Psoas muscle (tissue), 8 donors: ENCODE measurements at regions of chr12 and their contacts with region 1.

Region 1: DNA sequence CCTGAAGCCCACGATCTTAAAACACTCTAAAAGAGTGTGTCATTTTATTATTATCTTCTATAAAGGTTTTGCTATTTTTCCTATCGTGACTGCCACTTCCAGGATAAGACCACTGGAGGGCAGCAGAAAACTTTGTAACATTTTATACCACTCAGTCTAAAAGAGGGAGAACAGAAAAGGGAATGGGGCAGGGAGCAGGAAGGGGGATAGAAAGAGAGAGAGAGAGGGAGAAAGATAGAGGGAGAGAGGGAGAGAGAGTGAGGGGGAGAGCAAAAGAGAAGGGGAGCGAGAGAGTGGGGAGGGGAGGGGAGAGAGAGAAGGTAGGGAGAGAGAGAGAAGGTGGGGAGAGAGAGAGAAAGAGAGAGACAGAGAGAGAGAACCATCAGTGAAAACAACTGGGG is 2.0 kb upstream of the ART4 start:
- DNase-seq: no peak
- ATAC-seq: peak; percentile 63 to 80 (median 76)
- H3K4me3 ChIP-seq: no peak overlapping the region
- H3K27ac ChIP-seq: no peak overlapping the region
- H3K4me1 ChIP-seq: peaks cover 30% of the 10 kb centered on the region
- H3K27me3 ChIP-seq: no peaks in the 10 kb centered on the region
- CTCF ChIP-seq: peak; percentile 76

Region 2: GRCh38 chr12:14803011-14803829 is 42.1 kb before region 1 on chr12 and contains the starts of genes C12orf60 and WBP11:
- intact Hi-C with region 1: no loop called
- DNase-seq: peak; percentile 91 to 94
- ATAC-seq: peak; percentile 99 to 100 (median 100)
- H3K4me3 ChIP-seq: peak within 1 kb of the TSS; percentile 94
- H3K27ac ChIP-seq: peak within 1 kb of the TSS; percentile 94
- H3K4me1 ChIP-seq: peaks cover 23% of the 10 kb centered on the region
- H3K27me3 ChIP-seq: no peaks in the 10 kb centered on the region
- CTCF ChIP-seq: no peak
- total RNA-seq, gene C12orf60: 0.78 to 2.3 (median 1.6) TPM
- total RNA-seq, gene WBP11: 34.6 to 68.0 (median 58.3) TPM

Region 3: DNA sequence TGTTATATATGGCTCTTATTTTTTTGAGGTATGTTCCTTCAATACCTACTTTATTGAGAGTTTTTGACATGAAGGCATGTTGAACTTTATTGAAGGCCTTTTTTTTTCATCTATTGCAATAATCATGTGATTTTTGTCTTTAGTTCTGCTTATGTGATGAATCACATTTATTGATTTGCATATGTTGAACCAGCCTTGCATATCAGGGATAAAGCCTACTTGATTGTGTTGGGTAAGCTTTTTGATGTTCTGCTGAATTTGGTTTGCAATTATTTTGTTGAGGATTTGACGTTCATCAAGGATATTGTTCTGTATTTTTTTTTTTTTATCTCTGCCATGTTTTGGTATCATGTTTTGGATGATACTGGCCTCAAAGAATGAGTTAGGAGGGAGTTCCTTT is 13.2 kb after region 1 on chr12:
- intact Hi-C with region 1: no loop called
- DNase-seq: no peak
- ATAC-seq: no peak
- H3K4me3 ChIP-seq: no peak overlapping the region
- H3K27ac ChIP-seq: no peak overlapping the region
- H3K4me1 ChIP-seq: no peaks in the 10 kb centered on the region
- H3K27me3 ChIP-seq: no peaks in the 10 kb centered on the region
- CTCF ChIP-seq: no peak

Region 4: DNA sequence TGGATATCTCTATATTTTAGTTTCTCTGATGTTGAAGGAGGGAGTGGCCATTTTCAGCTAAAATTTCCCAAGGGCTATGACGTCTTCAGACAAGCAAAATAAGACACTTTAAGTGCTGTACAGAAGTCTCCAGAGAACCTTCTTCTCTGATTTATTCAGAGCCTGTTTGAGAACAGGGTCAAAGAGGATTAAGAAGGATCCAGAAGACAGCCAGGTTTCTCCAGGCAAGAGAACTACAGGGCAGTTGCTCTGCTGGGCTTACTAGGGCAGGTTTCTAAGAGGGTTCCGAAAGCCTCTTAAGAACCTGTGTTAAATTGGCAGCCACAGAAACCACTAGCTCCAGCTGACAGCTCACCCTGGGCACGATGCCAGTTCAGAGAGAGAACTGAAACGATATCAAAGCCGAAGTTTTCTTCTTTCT is 39.1 kb after region 1 on chr12:
- intact Hi-C with region 1: loop called in 1 of 2 experiments (anchors 5 kb)
- DNase-seq: peak; percentile 77 to 89
- ATAC-seq: peak; percentile 50 to 86 (median 73)
- H3K4me3 ChIP-seq: peak overlapping the region; percentile 52
- H3K27ac ChIP-seq: peak overlapping the region; percentile 57
- H3K4me1 ChIP-seq: peaks cover 5% of the 10 kb centered on the region
- H3K27me3 ChIP-seq: no peaks in the 10 kb centered on the region
- CTCF ChIP-seq: no peak

Region 5: GRCh38 chr12:14995583-14996425 is 150.5 kb after region 1 on chr12:
- intact Hi-C with region 1: loop called (anchors 2 kb)
- DNase-seq: no peak
- ATAC-seq: peak in 3 of 4 donors; percentile 42 to 81 (median 53)
- H3K4me3 ChIP-seq: no peak overlapping the region
- H3K27ac ChIP-seq: no peak overlapping the region
- H3K4me1 ChIP-seq: peaks cover 7% of the 10 kb centered on the region
- H3K27me3 ChIP-seq: no peaks in the 10 kb centered on the region
- CTCF ChIP-seq: peak; percentile 79

Region 6: DNA sequence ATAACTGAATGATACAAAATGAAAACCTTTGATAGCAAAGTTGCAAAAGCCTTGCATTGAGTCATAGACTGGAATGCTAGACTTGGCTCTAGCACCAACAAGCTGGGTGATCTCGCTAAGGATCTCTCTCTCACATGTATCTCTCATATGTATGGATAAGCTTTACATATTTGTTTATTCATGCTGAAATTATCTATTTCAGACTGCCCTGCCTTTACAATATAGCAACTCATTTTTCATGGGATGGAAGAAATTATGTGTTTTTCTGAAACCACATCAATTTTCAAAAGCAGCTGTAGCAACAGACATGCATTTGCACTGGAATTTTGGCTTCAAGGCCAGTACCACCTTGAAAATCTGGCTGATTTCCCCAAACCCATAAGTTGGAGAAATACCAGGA is 364.4 kb after region 1 on chr12:
- intact Hi-C with region 1: loop called in 1 of 2 experiments (anchors 10 kb)
- DNase-seq: no peak
- ATAC-seq: peak in 3 of 4 donors; percentile 55 to 71 (median 65)
- H3K4me3 ChIP-seq: no peak overlapping the region
- H3K27ac ChIP-seq: no peak overlapping the region
- H3K4me1 ChIP-seq: no peaks in the 10 kb centered on the region
- H3K27me3 ChIP-seq: peaks cover 0 to 3% (median 0%) of the 10 kb centered on the region in 3 donors
- CTCF ChIP-seq: no peak

Region 7: DNA sequence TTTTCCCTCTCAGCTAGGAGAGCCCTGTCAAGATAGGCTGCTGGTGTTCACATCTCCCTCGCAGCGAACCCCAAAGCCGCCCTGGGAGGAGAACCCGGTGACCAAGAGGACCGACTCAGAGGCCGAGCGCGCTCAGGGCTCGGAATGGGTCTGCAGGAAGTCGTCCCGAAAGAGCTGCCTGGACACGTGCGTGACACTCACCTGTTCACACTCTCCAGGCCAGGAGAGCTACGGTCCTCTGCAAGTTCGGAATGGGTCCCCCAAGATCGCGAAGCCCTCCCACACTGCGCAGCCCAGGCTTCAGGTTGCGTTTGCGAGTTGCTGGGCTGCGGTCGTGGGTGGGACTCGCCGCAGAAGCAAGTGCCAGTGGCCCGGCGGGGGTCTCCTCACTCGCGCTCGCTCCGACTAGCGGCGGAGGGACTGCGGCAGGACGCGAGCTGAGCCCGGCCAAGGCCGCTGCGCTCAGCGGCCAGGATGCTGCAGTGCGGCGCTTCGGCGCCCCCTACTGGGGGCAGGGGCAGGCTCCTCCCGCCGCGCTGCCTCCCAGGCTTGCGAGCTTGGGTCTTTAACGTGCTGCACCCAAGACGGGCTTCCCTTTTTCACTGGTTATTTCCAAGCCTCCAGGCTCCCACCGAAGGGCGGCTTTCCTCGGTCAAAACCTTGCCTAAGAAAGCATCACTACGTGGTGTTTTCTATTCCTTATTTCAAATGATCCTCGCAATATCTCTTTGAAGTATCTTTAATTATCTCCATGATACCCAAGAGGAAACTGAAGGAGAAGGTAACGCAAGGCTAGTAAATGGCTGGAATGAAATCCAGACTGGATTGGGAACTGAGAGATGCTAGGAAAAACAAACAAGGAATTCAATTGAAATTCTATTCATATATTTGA is 375.9 kb after region 1 on chr12 and contains the start of gene RERG:
- intact Hi-C with region 1: loop called (anchors 5 to 10 kb)
- DNase-seq: peak; percentile 85 to 90
- ATAC-seq: peak; percentile 97 to 100 (median 100)
- H3K4me3 ChIP-seq: peak within 1 kb of the TSS; percentile 71
- H3K27ac ChIP-seq: peak within 1 kb of the TSS; percentile 26
- H3K4me1 ChIP-seq: peaks cover 5% of the 10 kb centered on the region
- H3K27me3 ChIP-seq: peaks cover 0 to 10% (median 3%) of the 10 kb centered on the region in 3 donors
- CTCF ChIP-seq: peak; percentile 93
- total RNA-seq, gene RERG: 1.6 to 2.4 (median 2.3) TPM

Region 8: GRCh38 chr12:15276088-15276698 is 430.8 kb after region 1 on chr12:
- intact Hi-C with region 1: loop called in 1 of 2 experiments (anchors 10 kb)
- DNase-seq: no peak
- ATAC-seq: peak in 3 of 4 donors; percentile 29 to 66 (median 35)
- H3K4me3 ChIP-seq: no peak overlapping the region
- H3K27ac ChIP-seq: no peak overlapping the region
- H3K4me1 ChIP-seq: peaks cover 13% of the 10 kb centered on the region
- H3K27me3 ChIP-seq: no peaks in the 10 kb centered on the region
- CTCF ChIP-seq: peak; percentile 79

Region 9: DNA sequence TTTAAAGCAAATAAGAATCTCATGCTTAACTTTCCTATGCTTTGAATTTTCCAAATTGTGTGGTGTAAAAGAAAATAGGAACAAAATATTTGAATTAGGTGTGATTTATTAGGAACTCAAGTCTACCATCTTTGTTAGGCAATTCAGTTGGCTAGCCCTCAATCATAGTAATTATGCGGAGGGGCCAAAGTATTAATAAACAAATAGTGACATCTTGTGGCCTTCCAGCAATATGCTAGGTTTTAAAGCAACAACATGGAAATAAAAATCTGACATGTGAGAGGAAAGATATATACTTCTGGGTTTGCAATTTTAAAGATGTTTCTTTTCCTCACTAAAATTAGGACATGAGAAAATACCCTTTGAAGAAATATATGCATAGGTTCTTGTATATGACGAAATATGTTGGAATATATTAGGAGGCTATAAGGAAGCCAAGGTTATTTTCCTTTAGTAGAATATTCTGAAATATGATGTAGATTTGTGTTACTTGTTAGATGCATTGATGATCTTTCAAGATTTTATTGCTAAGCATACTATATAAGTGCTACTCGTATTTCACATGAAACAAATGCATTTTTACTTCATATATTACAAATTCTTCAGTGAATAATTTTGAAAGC is 677.3 kb after region 1 on chr12:
- intact Hi-C with region 1: loop called in 1 of 2 experiments (anchors 10 kb)
- DNase-seq: no peak
- ATAC-seq: peak in 2 of 4 donors; percentile 52 to 74
- H3K4me3 ChIP-seq: no peak overlapping the region
- H3K27ac ChIP-seq: no peak overlapping the region
- H3K4me1 ChIP-seq: no peaks in the 10 kb centered on the region
- H3K27me3 ChIP-seq: peaks cover 0 to 4% (median 0%) of the 10 kb centered on the region in 3 donors
- CTCF ChIP-seq: peak; percentile 51